MCF 10A (cell line): ENCODE measurements at regions of chr7 and their contacts with region 1.

Region 1: GRCh38 chr7:91784463-91784862 is 96.0 kb downstream of the MTERF1 start:
- DNase-seq: peak; percentile 63
- H3K4me3 Mint-ChIP-seq: no peak overlapping the region
- H3K27ac Mint-ChIP-seq: no peak overlapping the region
- H3K4me1 Mint-ChIP-seq: no peaks in the 10 kb centered on the region
- H3K27me3 Mint-ChIP-seq: no peaks in the 10 kb centered on the region
- CTCF ChIP-seq: peak; percentile 46

Region 2: DNA sequence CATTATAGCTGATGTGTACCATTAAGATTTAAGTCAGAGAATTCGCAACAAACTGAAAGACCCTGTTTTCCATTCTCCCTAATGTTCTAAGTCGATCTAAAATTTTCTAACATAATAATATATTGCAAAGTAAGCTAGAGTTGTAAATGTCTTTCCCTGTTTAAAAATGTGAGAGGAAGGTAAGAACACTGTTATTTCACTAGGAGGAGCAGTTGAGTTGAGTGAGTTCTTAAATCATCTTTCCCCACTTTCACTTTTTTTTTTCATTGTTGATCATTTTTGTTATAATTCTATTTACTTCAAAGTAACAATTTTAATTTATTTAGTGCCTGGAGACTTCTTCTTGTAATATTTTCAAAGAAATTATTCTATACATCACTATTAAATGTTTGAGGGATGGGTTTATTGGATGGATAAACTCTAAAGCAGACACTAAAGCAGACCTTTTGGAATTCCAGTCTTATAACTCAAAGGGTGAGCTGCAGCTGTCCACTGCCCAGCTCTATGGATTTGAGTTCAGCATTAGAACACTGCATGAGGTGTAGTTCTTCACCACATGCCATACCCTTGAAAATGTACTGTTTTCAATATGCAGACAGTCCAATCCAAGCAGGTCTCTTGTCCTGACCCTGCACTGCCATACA is 701.5 kb before region 1 on chr7:
- CTCF ChIA-PET with region 1: interaction called, 36 read pairs
- POLR2A ChIA-PET with region 1: interaction called, 3 read pairs
- intact Hi-C with region 1: loop called (anchors 1 kb)
- DNase-seq: peak; percentile 36
- H3K4me3 Mint-ChIP-seq: no peak overlapping the region
- H3K27ac Mint-ChIP-seq: no peak overlapping the region
- H3K4me1 Mint-ChIP-seq: no peaks in the 10 kb centered on the region
- H3K27me3 Mint-ChIP-seq: no peaks in the 10 kb centered on the region
- CTCF ChIP-seq: peak; percentile 62

Region 3: DNA sequence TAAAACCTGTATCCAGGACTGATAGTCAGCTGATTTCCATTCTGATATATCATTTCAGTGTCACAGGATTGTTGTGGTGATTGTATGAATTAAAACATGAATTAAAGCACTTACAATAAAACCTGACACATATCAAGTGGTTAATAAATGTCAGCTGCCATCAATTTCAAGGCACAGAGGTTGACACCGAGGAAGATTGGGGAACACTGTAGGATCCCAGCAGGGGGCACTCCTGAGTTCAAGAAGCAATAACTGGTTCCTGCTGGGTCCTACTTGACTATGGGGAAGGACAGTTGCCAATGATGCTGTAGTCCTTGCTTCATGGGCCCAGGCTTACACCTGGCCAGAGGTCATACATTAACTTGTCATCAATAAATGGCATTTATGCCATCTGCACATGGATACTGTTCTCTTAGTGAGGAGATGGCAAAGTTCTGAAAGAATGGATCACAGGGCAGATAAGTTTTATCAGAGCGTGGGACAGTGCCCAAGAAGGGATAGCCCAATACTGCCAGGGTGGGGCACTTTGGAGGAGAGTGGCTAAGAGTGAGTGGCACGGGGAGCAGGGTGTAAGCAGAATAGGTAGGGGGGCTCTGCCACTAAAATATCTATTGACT is 496.1 kb before region 1 on chr7:
- CTCF ChIA-PET with region 1: interaction called, 8 read pairs
- POLR2A ChIA-PET with region 1: no interaction called
- intact Hi-C with region 1: loop called (anchors 1 kb)
- DNase-seq: peak; percentile 65
- H3K4me3 Mint-ChIP-seq: no peak overlapping the region
- H3K27ac Mint-ChIP-seq: no peak overlapping the region
- H3K4me1 Mint-ChIP-seq: peaks cover 6% of the 10 kb centered on the region
- H3K27me3 Mint-ChIP-seq: peaks cover 24% of the 10 kb centered on the region
- CTCF ChIP-seq: peak; percentile 51

Region 4: GRCh38 chr7:91636129-91636724 is 148.2 kb before region 1 on chr7:
- CTCF ChIA-PET with region 1: interaction called, 7 read pairs
- POLR2A ChIA-PET with region 1: no interaction called
- intact Hi-C with region 1: loop called (anchors 2 kb)
- DNase-seq: peak; percentile 67
- H3K4me3 Mint-ChIP-seq: no peak overlapping the region
- H3K27ac Mint-ChIP-seq: no peak overlapping the region
- H3K4me1 Mint-ChIP-seq: peaks cover 6% of the 10 kb centered on the region
- H3K27me3 Mint-ChIP-seq: no peaks in the 10 kb centered on the region
- CTCF ChIP-seq: peak; percentile 50

Region 5: GRCh38 chr7:91771921-91772815 is 12.3 kb before region 1 on chr7:
- CTCF ChIA-PET with region 1: interaction called, 13 read pairs
- POLR2A ChIA-PET with region 1: no interaction called
- intact Hi-C with region 1: no loop called
- DNase-seq: peak; percentile 2
- H3K4me3 Mint-ChIP-seq: no peak overlapping the region
- H3K27ac Mint-ChIP-seq: no peak overlapping the region
- H3K4me1 Mint-ChIP-seq: peaks cover 10% of the 10 kb centered on the region
- H3K27me3 Mint-ChIP-seq: no peaks in the 10 kb centered on the region
- CTCF ChIP-seq: no peak